Common myeloid progenitor, CD34-positive (primary cell): ENCODE measurements at regions of chr13 and their contacts with region 1.

Region 1: DNA sequence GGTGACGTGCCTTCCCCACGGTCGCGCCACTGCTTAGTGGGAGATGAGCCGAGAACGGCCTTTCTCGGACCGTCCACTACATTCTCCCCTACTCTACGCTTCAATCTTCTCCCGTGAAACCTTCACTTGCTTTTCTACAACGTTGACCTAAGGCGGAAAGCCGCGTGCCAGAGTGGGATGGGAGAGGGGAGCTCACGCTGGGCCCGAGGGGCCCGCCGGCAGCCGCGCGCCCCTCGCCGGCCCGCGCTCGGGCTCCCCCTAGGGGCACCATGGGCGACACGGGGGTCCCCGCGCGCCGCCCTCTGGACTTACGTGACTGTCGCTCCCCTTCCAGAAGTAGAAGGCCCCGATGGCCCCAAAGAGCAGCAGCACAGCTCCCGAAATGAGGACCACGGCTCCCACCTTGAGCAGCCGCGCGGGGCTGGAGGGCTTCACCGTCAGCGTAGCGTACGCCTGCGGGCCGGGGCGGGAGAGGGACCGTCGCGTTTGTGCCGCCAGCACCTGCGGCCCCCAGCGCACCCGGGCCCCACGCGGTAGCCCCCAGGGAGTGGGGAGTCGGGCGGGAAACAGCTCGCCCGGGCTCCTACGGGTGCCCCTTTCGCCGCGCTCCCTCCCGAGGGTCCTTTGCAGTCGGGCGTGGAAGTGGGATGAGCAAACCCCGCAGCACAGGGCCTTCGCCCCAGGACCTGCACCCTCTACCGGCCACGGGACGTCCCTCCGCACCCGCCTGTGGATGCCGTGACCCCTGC is 727 bp downstream of the CNMD start:
- DNase-seq: peak; percentile 58 to 75 (median 68)
- H3K4me3 ChIP-seq: peak overlapping the region; percentile 34 to 84 (median 62)
- H3K27ac ChIP-seq: no peak overlapping the region
- H3K4me1 ChIP-seq: peaks cover 0 to 16% (median 9%) of the 10 kb centered on the region in 4 experiments
- H3K27me3 ChIP-seq: peaks cover 0 to 22% (median 18%) of the 10 kb centered on the region in 5 experiments

Region 2: DNA sequence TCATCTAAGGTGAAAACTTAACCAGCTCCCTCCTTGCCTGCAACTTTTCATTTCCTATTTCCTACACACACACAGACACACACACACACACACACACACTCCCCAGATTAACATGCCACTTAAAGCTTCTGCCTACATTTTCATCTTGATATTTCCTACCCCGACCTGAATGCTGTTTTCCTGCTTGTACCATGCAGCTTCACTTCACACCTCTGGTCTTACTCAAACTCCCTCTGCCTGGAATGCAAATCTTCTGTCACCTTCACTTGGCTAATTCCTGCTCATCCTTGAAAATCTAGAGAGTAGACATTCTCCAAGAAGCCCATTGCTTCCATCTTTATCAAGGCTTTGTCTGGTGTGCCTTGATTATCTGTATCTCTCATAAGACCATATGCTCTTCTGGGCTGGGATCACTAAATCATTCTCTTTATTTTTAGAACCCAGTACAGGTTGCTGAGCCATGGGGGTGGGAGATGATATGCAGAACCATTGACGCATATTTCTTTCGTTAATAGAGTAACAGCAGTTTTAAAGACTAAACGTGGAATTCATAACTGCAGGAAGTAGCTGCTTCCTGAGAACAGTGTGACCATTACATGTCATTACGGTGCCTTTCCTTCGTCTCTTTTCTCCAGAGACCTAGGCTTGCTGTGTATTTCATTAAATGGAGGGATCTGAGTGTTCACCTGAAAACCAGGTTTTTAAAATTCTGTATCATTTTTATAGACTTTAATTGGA is 37.0 kb before region 1 on chr13:
- CTCF ChIA-PET with region 1: interaction called, 19 read pairs
- POLR2A ChIA-PET with region 1: no interaction called
- DNase-seq: peak; percentile 42 to 86 (median 75)
- H3K4me3 ChIP-seq: peak overlapping the region in 1 of 7 experiments; percentile 12
- H3K27ac ChIP-seq: peak overlapping the region in 1 of 2 experiments; percentile 67
- H3K4me1 ChIP-seq: peaks cover 19 to 34% (median 25%) of the 10 kb centered on the region in 4 experiments
- H3K27me3 ChIP-seq: no peaks in the 10 kb centered on the region

Region 3: DNA sequence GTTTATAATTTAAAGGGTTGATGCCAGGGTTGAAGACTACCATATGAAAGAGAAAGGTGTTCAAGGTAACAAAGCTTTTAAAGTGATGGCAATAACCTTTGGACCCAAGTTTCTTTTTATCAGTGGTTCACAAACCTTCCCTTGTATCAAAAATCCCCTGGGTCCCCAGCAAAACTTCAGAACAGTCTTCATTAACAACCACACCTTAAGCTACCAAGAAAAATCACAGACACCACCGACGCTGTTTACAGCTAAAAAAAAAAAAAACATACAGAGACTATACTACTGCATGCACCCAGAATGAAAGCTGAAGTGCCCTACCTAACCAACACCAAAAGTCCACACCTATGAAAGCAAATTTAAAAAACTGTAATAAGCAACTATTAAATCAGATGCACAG is 12.6 kb before region 1 on chr13:
- CTCF ChIA-PET with region 1: interaction called, 11 read pairs
- POLR2A ChIA-PET with region 1: no interaction called
- DNase-seq: no peak
- H3K4me3 ChIP-seq: no peak overlapping the region
- H3K27ac ChIP-seq: no peak overlapping the region
- H3K4me1 ChIP-seq: no peaks in the 10 kb centered on the region
- H3K27me3 ChIP-seq: no peaks in the 10 kb centered on the region

Region 4: DNA sequence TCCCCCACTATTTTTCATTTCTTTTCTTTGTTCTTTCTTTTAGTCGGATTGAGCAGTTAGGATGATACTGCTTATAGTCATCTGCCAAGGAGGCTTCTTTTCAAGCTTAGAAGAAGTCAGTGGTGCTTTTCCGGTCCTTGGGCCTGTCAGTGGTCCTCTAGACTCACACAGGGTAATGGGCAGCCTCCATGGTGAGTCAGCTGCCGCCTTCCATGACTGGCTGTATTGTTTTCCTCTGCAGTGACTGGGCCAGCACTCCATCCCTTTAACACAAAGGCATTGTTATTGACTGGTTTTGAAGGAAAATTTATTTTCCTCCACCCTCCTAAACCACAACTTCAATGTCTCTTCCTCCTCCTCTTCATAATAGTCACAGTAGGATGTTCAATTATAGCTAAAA is 47.9 kb after region 1 on chr13:
- CTCF ChIA-PET with region 1: no interaction called
- POLR2A ChIA-PET with region 1: no interaction called
- DNase-seq: no peak
- H3K4me3 ChIP-seq: no peak overlapping the region
- H3K27ac ChIP-seq: no peak overlapping the region
- H3K4me1 ChIP-seq: no peaks in the 10 kb centered on the region
- H3K27me3 ChIP-seq: peaks cover 0 to 6% (median 0%) of the 10 kb centered on the region in 5 experiments

Region 5: DNA sequence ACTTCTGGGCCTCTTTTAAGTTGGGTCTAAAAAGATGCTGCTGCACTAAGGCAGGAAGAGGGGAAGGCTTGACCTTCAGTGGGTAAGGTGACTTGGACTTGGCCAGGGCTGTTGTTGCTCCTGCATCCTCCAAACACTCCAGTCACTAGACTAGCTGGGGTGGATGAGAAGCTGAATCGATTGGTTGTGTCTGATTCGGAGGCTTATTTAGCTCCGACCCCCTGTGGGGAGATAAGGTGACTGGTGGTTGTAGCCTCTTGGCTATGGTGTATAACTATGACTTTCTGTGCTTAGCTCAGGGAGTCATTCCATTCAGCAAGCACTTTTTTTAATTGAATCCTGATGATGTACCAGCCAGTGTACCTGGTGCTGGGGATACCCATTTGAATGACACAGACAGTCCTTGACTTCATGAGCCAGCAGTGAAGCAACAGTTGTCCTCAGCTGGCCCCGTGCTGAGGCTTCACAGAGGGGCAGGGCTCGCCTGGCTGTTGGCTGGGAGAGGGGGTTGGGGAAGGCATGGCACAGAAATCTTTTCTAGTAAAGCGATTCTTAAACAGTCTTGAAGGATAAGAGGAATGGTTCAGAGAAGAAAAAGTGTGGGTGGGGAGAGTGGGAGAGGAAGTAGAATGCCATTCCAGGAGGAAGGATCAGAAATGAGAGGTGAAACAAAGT is 99.7 kb after region 1 on chr13:
- CTCF ChIA-PET with region 1: no interaction called
- POLR2A ChIA-PET with region 1: no interaction called
- DNase-seq: no peak
- H3K4me3 ChIP-seq: no peak overlapping the region
- H3K27ac ChIP-seq: no peak overlapping the region
- H3K4me1 ChIP-seq: no peaks in the 10 kb centered on the region
- H3K27me3 ChIP-seq: peaks cover 2 to 52% (median 11%) of the 10 kb centered on the region in 5 experiments